ENCODE measurements at regions of chr12 and their contacts with region 1.

Region 1: GRCh38 chr12:52213512-52214420 is 19.3 kb upstream of the KRT7 start:
- H3K4me3 ChIP-seq: no peak overlapping the region
- H3K27ac ChIP-seq: no peak overlapping the region
- H3K4me1 ChIP-seq: no peaks in the 10 kb centered on the region; the same call in 1 of the 2 replicates
- CTCF ChIP-seq: peak; percentile 98

Region 2: DNA sequence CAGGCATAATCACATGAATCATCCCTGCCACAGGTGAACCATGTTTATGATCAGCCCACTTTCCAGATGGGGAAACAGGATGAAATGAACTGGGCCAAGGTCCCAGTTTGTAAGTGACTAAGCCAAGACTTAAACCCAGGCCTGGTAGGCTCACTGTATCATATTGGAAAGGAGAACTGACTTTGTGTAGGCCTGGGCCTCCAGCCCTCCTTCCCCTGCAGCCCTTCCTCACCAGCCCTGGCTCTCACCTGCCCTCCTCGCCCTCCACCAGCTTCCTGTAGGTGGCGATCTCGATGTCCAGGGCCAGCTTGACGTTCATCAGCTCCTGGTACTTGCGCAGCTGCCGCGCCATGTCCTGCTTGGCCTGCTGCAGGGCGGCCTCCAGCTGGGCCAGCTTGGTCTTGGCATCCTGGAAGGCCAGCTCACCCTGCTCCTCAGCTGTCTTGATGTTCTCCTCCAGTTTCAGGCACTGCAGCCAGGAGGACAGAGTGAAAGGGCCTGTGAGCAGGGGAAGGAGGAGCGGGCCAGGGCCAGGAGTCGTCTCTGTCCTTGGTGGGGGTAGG is 41.7 kb before region 1 on chr12:
- CTCF ChIA-PET with region 1: interaction called, 62 read pairs
- POLR2A ChIA-PET with region 1: no interaction called
- H3K4me3 ChIP-seq: no peak overlapping the region
- H3K27ac ChIP-seq: no peak overlapping the region
- H3K4me1 ChIP-seq: no peaks in the 10 kb centered on the region
- CTCF ChIP-seq: peak; percentile 45

Region 3: GRCh38 chr12:52181746-52182145 is 32.0 kb before region 1 on chr12:
- CTCF ChIA-PET with region 1: interaction called, 16 read pairs
- POLR2A ChIA-PET with region 1: no interaction called
- H3K4me3 ChIP-seq: no peak overlapping the region
- H3K27ac ChIP-seq: no peak overlapping the region
- H3K4me1 ChIP-seq: peaks cover 5% of the 10 kb centered on the region; the same call in 1 of the 2 replicates
- CTCF ChIP-seq: no peak

Region 4: GRCh38 chr12:52192173-52192791 is 21.5 kb before region 1 on chr12:
- CTCF ChIA-PET with region 1: interaction called, 53 read pairs
- POLR2A ChIA-PET with region 1: interaction called, 4 read pairs
- H3K4me3 ChIP-seq: no peak overlapping the region; the same call in 1 of the 2 replicates
- H3K27ac ChIP-seq: no peak overlapping the region
- H3K4me1 ChIP-seq: peaks cover 2% of the 10 kb centered on the region; the same call in 1 of the 2 replicates
- CTCF ChIP-seq: no peak

Region 5: DNA sequence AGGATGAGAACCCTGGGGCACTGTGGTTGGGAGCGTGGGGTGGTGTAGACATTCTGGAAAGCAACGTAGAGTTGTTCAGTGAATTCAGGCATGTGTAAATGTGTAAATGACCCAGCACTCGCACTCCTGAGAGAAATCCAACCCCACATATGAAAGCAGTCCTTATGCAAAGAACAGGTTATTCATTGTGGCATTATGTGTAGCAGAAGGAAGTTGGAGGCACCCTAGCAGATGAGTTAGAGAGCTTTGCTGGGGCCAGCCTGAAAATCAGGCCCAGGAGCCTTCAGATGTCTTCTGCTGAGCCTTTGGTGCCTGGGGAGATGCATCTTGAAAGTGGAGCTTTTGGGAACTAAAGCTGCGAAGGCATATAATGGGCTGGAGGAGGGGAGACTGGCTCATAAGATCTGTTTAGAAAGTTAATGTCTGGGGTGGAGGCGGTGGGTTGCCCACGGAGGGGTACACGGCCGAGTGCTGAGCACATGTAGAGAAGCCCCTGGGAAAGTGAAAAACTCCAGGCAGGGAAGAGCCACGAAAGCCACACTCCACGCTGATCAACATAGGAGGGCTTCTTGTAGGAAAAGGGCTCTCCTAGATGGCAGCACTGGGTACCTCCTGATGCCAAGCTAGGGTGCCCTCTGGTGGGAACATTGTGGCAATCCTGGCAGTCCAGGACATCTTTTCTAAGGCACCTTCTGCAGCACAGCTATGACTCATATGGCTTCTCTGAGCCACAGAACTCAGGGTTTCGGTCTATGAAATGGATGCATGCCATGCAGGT is 113.5 kb after region 1 on chr12:
- CTCF ChIA-PET with region 1: interaction called, 14 read pairs
- POLR2A ChIA-PET with region 1: no interaction called
- H3K4me3 ChIP-seq: no peak overlapping the region
- H3K27ac ChIP-seq: no peak overlapping the region
- H3K4me1 ChIP-seq: no peaks in the 10 kb centered on the region
- CTCF ChIP-seq: peak; percentile 97

Region 6: GRCh38 chr12:52582971-52583456 is 369.2 kb after region 1 on chr12:
- CTCF ChIA-PET with region 1: no interaction called
- POLR2A ChIA-PET with region 1: no interaction called
- H3K4me3 ChIP-seq: no peak overlapping the region
- H3K27ac ChIP-seq: no peak overlapping the region
- H3K4me1 ChIP-seq: no peaks in the 10 kb centered on the region
- CTCF ChIP-seq: peak; percentile 68

Measured in HEK293 (cell line).